Aorta (tissue), 5 donors: ENCODE measurements at regions of chr1 and their contacts with region 1.

Region 1: DNA sequence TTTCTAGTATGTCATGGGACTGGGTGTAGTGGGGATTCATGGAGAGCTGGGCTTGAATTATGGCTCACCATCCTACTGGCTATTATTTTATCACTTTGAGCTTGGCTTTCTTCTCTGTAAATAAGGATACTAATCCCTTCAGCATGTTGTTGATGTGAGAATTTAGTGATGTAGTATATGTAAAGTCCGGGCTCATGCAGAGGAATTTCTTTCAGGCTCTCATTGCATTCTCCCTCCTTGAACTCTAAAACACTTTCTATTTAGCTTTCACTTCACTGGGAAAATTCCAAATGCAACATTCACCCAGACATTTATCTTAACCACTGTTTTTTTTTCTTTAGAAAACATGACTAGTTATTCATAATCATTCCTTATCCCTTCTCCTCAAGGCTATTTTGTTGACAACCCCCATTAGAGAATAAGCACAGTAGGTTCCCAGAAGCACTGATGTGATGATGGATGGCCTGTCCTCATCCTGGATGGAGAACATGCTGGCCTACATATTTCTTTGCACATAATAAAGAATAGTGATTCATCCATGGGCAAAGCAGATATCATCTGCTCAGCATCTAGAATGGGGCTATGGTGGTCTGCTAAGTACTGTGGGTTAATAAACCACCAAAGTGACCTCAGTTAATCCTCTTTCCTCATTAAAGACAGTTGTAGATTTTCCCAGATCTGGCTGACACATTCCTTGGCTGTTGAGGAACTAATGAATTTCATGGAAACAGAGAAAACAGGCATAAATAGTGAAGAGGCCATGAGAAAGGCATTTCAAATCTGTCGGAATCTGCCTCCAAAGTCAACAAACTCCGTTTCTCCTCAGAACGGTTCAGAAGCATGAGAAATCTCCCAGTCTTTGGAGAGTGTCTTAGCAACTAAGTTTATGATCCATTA is 68.0 kb upstream of the CYP2J2 start:
- DNase-seq: no peak
- ATAC-seq: peak; percentile 87
- H3K4me3 ChIP-seq: no peak overlapping the region
- H3K27ac ChIP-seq: peak overlapping the region; percentile 67 to 97
- H3K4me1 ChIP-seq: peaks cover 0 to 1% of the 10 kb centered on the region in 2 donors
- H3K27me3 ChIP-seq: no peaks in the 10 kb centered on the region

Region 2: DNA sequence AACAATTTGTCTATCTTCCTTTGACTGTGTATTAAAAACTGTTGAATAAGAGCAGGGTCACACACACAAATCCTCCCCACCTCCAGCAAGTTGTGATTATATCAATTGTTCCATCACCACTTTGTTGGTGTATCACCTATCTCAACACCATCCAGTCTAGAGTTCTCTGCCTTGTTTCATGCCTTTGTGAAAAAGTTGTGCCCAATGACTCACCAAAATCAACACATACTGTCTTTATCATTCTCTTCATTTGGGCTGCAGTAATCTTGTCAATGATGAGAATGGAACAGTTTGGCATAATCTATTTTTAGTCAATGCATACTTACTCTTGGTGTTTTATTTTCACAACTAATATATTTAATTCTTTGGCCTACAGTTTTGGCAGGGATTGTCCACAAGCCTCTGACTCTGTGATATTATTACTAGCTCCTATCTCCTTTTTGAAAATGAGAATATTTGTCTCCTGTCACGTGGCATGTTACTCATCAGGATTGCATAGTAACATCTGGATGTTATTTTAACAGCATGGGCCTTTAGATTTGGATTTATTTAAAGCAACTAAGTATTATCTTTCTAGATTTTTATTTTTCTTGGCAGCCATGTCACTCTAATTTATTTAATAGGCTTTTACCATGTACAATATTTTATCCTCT is 74.0 kb after region 1 on chr1:
- intact Hi-C with region 1: loop called in 1 of 2 experiments (anchors 5 kb)
- DNase-seq: no peak
- ATAC-seq: peak; percentile 54
- H3K4me3 ChIP-seq: no peak overlapping the region
- H3K27ac ChIP-seq: no peak overlapping the region
- H3K4me1 ChIP-seq: peaks cover 0 to 7% of the 10 kb centered on the region in 2 donors
- H3K27me3 ChIP-seq: no peaks in the 10 kb centered on the region

Region 3: GRCh38 chr1:60132985-60133675 is 138.6 kb after region 1 on chr1:
- intact Hi-C with region 1: loop called (anchors 5 to 10 kb)
- DNase-seq: peak; percentile 69 to 73
- ATAC-seq: peak; percentile 72
- H3K4me3 ChIP-seq: no peak overlapping the region
- H3K27ac ChIP-seq: peak overlapping the region; percentile 45 to 91
- H3K4me1 ChIP-seq: peaks cover 5 to 7% of the 10 kb centered on the region in 2 donors
- H3K27me3 ChIP-seq: no peaks in the 10 kb centered on the region